ENCODE measurements at regions of chr15 and their contacts with region 1.

Region 1: DNA sequence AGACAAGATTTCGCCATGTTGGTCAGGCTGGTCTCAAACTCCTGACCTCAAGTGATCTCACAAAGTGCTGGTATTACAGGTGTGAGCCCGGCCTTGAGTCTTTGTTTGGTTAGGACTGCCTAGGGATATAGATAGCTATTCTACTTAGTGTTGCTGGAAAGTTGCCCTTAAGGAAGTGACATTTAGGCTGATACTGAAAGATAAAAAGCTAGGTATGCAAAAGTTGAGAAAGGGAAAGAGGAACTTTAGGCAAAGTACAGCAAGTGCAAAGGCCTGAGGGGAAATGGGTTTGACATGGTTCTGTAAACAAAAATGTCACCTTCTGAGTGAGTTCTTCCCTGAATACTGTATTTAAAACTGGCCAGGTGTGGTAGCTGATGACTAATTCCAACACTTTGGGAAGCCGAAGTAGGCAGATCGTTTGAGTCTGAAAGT is 111.5 kb downstream of the ZNF609 start:
- DNase-seq: peak; percentile 92
- ATAC-seq: peak; percentile 83
- H3K4me3 ChIP-seq: no peak overlapping the region
- H3K27ac ChIP-seq: peak overlapping the region; percentile 75
- H3K4me1 ChIP-seq: peaks cover 43% of the 10 kb centered on the region
- H3K27me3 ChIP-seq: no peaks in the 10 kb centered on the region
- CTCF ChIP-seq: no peak
- EP300 ChIP-seq: 0 out of 4 replicates have a peak, but pooled peaks of 1 of the 2 experiments have one; percentile 29
- POLR2A ChIP-seq: no peak
- RAD21 ChIP-seq: no peak

Region 2: DNA sequence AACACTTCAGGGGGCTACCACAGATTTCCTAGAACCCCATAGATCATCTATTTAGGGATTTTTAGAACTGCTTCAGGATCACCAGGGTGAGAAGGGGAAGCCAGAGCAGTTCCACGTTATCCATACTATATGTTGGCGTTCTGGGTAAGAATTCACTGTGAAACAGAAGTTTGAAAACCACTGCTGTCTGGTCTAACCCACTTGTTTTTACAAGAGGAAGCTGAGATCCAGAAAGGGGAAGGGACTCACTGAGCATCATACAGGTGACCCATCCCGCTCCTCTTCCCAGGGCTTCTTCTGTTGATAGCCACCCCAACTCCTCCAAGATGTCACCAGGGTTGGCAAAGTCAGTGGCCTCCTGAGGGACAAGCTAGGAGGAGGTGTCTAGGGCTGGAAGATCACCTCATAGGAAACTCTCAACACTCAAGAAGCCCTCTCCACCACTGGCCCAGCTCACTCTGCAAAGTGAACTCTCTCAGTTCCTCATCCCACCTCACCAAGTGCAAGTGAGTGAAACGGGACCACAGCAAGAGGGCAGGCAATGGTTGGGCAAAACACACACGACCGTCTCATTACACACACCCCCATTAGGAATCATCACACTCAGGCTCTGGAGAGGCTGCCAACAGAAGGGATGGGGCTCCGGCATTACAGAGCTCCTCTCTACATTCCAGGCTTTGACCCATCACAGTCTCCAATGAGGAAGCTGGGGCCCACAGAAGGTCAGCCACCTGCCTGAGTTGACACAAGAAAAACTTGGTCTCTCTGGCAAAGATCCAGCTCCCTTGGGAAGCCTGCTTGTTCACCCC is 527.4 kb before region 1 on chr15:
- CTCF ChIA-PET with region 1: no interaction called
- POLR2A ChIA-PET with region 1: no interaction called
- RAD21 ChIA-PET with region 1: no interaction called
- SMC1A ChIA-PET with region 1: no interaction called
- in situ Hi-C with region 1: no loop called
- intact Hi-C with region 1: no loop called
- DNase-seq: peak; percentile 71
- ATAC-seq: peak; percentile 78
- H3K4me3 ChIP-seq: peak overlapping the region; percentile 69
- H3K27ac ChIP-seq: peak overlapping the region; percentile 55
- H3K4me1 ChIP-seq: peaks cover 36% of the 10 kb centered on the region
- H3K27me3 ChIP-seq: no peaks in the 10 kb centered on the region
- CTCF ChIP-seq: no peak
- EP300 ChIP-seq: 0 out of 4 replicates have a peak, but pooled peaks of 1 of the 2 experiments have one; percentile 36
- POLR2A ChIP-seq: 0 out of 2 replicates have a peak, but pooled peaks have one; percentile 31
- RAD21 ChIP-seq: peak; percentile 25; the same call in 1 of the 2 replicates

Region 3: GRCh38 chr15:64622410-64623260 is 50.8 kb after region 1 on chr15:
- CTCF ChIA-PET with region 1: interaction called, 4 read pairs
- POLR2A ChIA-PET with region 1: interaction called, 6 read pairs
- RAD21 ChIA-PET with region 1: interaction called, 5 read pairs
- SMC1A ChIA-PET with region 1: interaction called, 8 read pairs
- in situ Hi-C with region 1: no loop called
- intact Hi-C with region 1: loop called (anchors 5 kb)
- DNase-seq: peak; percentile 96
- ATAC-seq: peak; percentile 93
- H3K4me3 ChIP-seq: no peak overlapping the region
- H3K27ac ChIP-seq: peak overlapping the region; percentile 90
- H3K4me1 ChIP-seq: peaks cover 55% of the 10 kb centered on the region
- H3K27me3 ChIP-seq: no peaks in the 10 kb centered on the region
- CTCF ChIP-seq: no peak
- EP300 ChIP-seq: peak; percentile 69 to 74
- POLR2A ChIP-seq: no peak
- RAD21 ChIP-seq: no peak

Measured in GM12878 (cell line).